ENCODE measurements at regions of chr9 and their contacts with region 1.

Region 1: DNA sequence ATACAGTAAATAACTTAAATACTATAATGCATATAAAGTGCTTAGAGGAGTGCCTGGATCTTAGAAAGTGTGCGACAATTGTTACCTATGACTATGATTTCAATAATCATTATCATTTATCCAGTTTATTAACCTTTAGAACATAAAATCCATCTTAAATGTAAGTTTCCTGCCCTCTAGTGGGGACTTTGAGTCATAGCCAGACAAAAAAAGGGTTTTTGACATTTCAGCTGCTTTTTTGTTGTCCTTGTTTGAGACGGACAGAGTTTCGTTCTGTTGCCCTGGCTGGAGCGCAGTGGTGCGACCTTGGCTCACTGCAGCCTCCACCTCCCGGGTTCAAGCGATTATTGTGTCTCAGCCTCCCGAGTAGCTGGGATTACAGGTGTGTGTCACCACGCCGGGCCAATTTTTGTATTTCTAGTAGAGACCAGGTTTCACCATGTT is 9.7 kb upstream of the C9orf152 start:
- DNase-seq: no peak
- ATAC-seq: no peak
- H3K4me3 Mint-ChIP-seq: no peak overlapping the region
- H3K27ac Mint-ChIP-seq: no peak overlapping the region
- H3K4me1 Mint-ChIP-seq: peaks cover 4% of the 10 kb centered on the region
- H3K27me3 Mint-ChIP-seq: peaks cover 2% of the 10 kb centered on the region
- CTCF ChIP-seq: no peak

Region 2: GRCh38 chr9:109880277-109881169 is 337.2 kb before region 1 on chr9:
- CTCF ChIA-PET with region 1: interaction called, 15 read pairs
- POLR2A ChIA-PET with region 1: no interaction called
- intact Hi-C with region 1: loop called (anchors 1 kb)
- DNase-seq: peak; percentile 17
- ATAC-seq: peak; percentile 72
- H3K4me3 Mint-ChIP-seq: no peak overlapping the region
- H3K27ac Mint-ChIP-seq: peak overlapping the region; percentile 10
- H3K4me1 Mint-ChIP-seq: peaks cover 2% of the 10 kb centered on the region
- H3K27me3 Mint-ChIP-seq: peaks cover 10% of the 10 kb centered on the region
- CTCF ChIP-seq: no peak

Region 3: GRCh38 chr9:110058304-110058953 is 159.2 kb before region 1 on chr9:
- CTCF ChIA-PET with region 1: interaction called, 3 read pairs
- POLR2A ChIA-PET with region 1: no interaction called
- intact Hi-C with region 1: loop called (anchors 5 kb)
- DNase-seq: no peak
- ATAC-seq: peak; percentile 75
- H3K4me3 Mint-ChIP-seq: peak overlapping the region; percentile 33
- H3K27ac Mint-ChIP-seq: peak overlapping the region; percentile 83
- H3K4me1 Mint-ChIP-seq: peaks cover 73% of the 10 kb centered on the region
- H3K27me3 Mint-ChIP-seq: no peaks in the 10 kb centered on the region
- CTCF ChIP-seq: no peak

Region 4: DNA sequence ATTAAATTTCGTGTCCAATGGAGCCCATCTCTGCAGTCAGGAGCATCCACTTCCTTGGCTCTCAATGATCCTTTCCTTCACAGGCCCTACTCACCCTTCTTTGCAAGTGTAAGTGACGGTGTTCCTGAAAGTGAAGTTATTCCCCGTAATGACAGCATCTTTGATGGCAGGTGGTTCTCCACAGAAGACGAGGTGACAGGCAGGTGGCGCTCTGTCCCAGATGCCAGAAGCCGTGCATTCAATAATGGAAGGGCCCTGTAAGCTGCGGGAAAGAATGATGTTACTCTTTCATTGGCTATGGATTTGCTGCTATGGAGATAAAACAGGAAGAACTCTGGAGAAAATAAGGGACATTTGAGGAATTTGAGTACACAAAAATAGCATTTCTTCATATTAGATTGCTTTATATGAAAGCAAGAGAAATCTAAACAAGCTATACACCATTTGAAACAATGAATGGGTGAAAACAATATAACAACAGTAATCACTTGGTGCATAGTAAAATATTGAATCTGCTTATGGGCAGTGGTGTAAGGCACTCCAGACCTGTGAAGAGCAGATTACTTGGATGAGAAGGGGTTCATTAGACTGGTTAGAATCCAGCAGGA is 209.9 kb after region 1 on chr9:
- CTCF ChIA-PET with region 1: no interaction called
- POLR2A ChIA-PET with region 1: no interaction called
- intact Hi-C with region 1: no loop called
- DNase-seq: no peak
- ATAC-seq: no peak
- H3K4me3 Mint-ChIP-seq: no peak overlapping the region
- H3K27ac Mint-ChIP-seq: no peak overlapping the region
- H3K4me1 Mint-ChIP-seq: no peaks in the 10 kb centered on the region
- H3K27me3 Mint-ChIP-seq: peaks cover 2% of the 10 kb centered on the region
- CTCF ChIP-seq: no peak